Caco-2 (cell line): ENCODE measurements at regions of chr2 and their contacts with region 1.

Region 1: GRCh38 chr2:47323009-47323821 is 79.7 kb upstream of the MSH2 start:
- DNase-seq: peak; percentile 82 to 91
- H3K4me3 ChIP-seq: no peak overlapping the region
- H3K4me3 Mint-ChIP-seq: no peak overlapping the region
- H3K27ac Mint-ChIP-seq: no peak overlapping the region
- H3K4me1 ChIP-seq: peaks cover 28% of the 10 kb centered on the region
- H3K4me1 Mint-ChIP-seq: peaks cover 25% of the 10 kb centered on the region
- H3K27me3 ChIP-seq: no peaks in the 10 kb centered on the region
- H3K27me3 Mint-ChIP-seq: no peaks in the 10 kb centered on the region
- CTCF ChIP-seq: peak; percentile 95 to 98

Region 2: GRCh38 chr2:46803911-46804670 is 519.1 kb before region 1 on chr2:
- CTCF ChIA-PET with region 1: no interaction called
- POLR2A ChIA-PET with region 1: no interaction called
- intact Hi-C with region 1: loop called (anchors 10 kb)
- DNase-seq: no peak
- H3K4me3 ChIP-seq: no peak overlapping the region
- H3K4me3 Mint-ChIP-seq: no peak overlapping the region
- H3K27ac Mint-ChIP-seq: no peak overlapping the region
- H3K4me1 ChIP-seq: no peaks in the 10 kb centered on the region
- H3K4me1 Mint-ChIP-seq: no peaks in the 10 kb centered on the region
- H3K27me3 ChIP-seq: no peaks in the 10 kb centered on the region
- H3K27me3 Mint-ChIP-seq: peaks cover 11% of the 10 kb centered on the region
- CTCF ChIP-seq: no peak

Region 3: GRCh38 chr2:46915811-46916630 is 407.2 kb before region 1 on chr2:
- CTCF ChIA-PET with region 1: interaction called, 3 read pairs
- POLR2A ChIA-PET with region 1: no interaction called
- intact Hi-C with region 1: loop called (anchors 2 kb)
- DNase-seq: peak; percentile 96 to 97
- H3K4me3 ChIP-seq: peak overlapping the region; percentile 93
- H3K4me3 Mint-ChIP-seq: peak overlapping the region; percentile 88
- H3K27ac Mint-ChIP-seq: peak overlapping the region; percentile 0
- H3K4me1 ChIP-seq: peaks cover 17% of the 10 kb centered on the region
- H3K4me1 Mint-ChIP-seq: peaks cover 19% of the 10 kb centered on the region
- H3K27me3 ChIP-seq: no peaks in the 10 kb centered on the region
- H3K27me3 Mint-ChIP-seq: no peaks in the 10 kb centered on the region
- CTCF ChIP-seq: no peak

Region 4: GRCh38 chr2:46942139-46942517 is 381.1 kb before region 1 on chr2:
- CTCF ChIA-PET with region 1: interaction called, 11 read pairs
- POLR2A ChIA-PET with region 1: no interaction called
- intact Hi-C with region 1: no loop called
- DNase-seq: peak in 1 of 2 experiments; percentile 43
- H3K4me3 ChIP-seq: peak overlapping the region; percentile 94
- H3K4me3 Mint-ChIP-seq: peak overlapping the region; percentile 87
- H3K27ac Mint-ChIP-seq: peak overlapping the region; percentile 82
- H3K4me1 ChIP-seq: peaks cover 16% of the 10 kb centered on the region
- H3K4me1 Mint-ChIP-seq: peaks cover 24% of the 10 kb centered on the region
- H3K27me3 ChIP-seq: no peaks in the 10 kb centered on the region
- H3K27me3 Mint-ChIP-seq: no peaks in the 10 kb centered on the region
- CTCF ChIP-seq: no peak

Region 5: DNA sequence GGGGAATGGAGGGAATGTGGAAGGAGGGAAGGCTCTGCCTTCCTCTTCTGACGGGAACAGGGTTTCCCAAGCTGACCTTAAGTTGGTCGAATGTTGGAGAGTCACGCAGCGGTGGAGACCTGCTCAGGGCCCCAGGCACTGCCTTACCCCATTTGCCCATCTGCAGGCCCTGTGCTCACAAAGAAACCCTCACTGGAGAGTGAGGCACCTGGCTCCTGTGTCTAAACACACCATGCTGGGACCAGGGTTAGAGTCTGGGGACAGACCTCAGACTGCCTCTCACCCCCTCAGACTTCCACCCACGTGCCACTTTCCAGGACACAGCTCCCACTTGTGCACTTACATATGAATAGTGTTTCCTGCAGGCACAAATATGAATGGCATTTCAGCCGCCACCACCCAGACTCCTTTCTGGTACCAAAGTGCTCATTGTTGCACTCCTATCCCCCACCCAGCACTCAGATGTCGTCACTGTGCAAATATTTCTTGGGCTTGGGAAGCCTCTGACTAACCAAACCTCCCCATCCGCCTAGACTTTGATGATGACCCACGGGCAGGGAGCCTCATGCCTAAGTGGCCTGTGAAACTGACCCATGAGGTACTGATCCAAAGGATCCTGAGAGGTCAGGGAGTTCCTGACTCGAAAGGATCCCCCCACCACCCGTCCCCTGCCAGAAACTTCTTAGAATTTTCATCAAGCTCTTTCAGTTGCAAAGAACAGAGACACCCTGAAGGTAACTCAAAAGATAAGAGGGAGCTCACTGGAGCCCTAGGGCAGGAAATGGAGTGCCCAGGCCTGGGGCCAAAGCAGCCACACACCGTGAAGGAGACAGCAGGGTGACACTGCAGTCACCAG is 246.4 kb before region 1 on chr2:
- CTCF ChIA-PET with region 1: interaction called, 10 read pairs
- POLR2A ChIA-PET with region 1: interaction called, 3 read pairs
- intact Hi-C with region 1: no loop called
- DNase-seq: peak; percentile 91 to 95
- H3K4me3 ChIP-seq: no peak overlapping the region
- H3K4me3 Mint-ChIP-seq: peak overlapping the region; percentile 52
- H3K27ac Mint-ChIP-seq: peak overlapping the region; percentile 89
- H3K4me1 ChIP-seq: peaks cover 58% of the 10 kb centered on the region
- H3K4me1 Mint-ChIP-seq: peaks cover 73% of the 10 kb centered on the region
- H3K27me3 ChIP-seq: no peaks in the 10 kb centered on the region
- H3K27me3 Mint-ChIP-seq: no peaks in the 10 kb centered on the region
- CTCF ChIP-seq: peak in 1 of 2 experiments; percentile 13

Region 6: DNA sequence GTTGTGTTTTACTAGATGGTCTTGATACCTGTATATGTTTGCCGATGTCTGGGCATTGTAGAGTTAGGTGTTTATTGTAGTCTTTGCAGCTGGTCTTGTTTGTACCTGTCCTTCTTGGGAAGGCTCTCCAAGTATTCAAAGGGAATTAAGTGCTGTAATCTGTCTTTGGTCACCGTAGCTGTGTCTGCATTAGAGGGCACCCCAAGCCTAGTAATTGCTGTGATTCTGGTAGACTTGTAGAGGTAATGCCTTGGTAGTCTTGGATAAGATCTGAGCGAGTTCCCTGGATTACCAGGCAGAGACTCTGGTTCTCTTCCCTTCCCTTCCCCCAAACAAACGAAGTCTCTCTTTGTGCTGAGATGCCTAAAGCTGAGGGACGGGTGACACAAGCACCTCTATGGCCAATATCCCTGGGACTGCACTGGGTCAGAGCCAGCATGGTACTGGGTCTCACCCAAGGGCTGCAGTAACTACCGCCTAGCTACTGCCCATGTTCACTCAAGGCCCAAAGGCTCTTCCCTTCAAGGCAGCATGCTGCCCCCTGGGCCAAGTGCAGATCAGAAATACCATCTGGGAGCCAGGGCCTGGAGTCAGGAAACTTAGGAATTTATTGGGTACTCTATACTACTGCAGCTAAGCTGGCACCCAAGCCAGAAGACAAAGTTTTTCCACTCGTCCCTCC is 195.2 kb before region 1 on chr2:
- CTCF ChIA-PET with region 1: interaction called, 7 read pairs
- POLR2A ChIA-PET with region 1: no interaction called
- intact Hi-C with region 1: loop called (anchors 1 kb)
- DNase-seq: peak in 1 of 2 experiments; percentile 25
- H3K4me3 ChIP-seq: no peak overlapping the region
- H3K4me3 Mint-ChIP-seq: no peak overlapping the region
- H3K27ac Mint-ChIP-seq: peak overlapping the region; percentile 22
- H3K4me1 ChIP-seq: peaks cover 10% of the 10 kb centered on the region
- H3K4me1 Mint-ChIP-seq: peaks cover 26% of the 10 kb centered on the region
- H3K27me3 ChIP-seq: no peaks in the 10 kb centered on the region
- H3K27me3 Mint-ChIP-seq: no peaks in the 10 kb centered on the region
- CTCF ChIP-seq: no peak

Region 7: GRCh38 chr2:47303341-47304148 is 19.7 kb before region 1 on chr2:
- CTCF ChIA-PET with region 1: no interaction called
- POLR2A ChIA-PET with region 1: no interaction called
- intact Hi-C with region 1: no loop called
- DNase-seq: no peak
- H3K4me3 ChIP-seq: no peak overlapping the region
- H3K4me3 Mint-ChIP-seq: peak overlapping the region; percentile 20
- H3K27ac Mint-ChIP-seq: peak overlapping the region; percentile 27
- H3K4me1 ChIP-seq: peaks cover 67% of the 10 kb centered on the region
- H3K4me1 Mint-ChIP-seq: peaks cover 51% of the 10 kb centered on the region
- H3K27me3 ChIP-seq: no peaks in the 10 kb centered on the region
- H3K27me3 Mint-ChIP-seq: no peaks in the 10 kb centered on the region
- CTCF ChIP-seq: no peak

Region 8: DNA sequence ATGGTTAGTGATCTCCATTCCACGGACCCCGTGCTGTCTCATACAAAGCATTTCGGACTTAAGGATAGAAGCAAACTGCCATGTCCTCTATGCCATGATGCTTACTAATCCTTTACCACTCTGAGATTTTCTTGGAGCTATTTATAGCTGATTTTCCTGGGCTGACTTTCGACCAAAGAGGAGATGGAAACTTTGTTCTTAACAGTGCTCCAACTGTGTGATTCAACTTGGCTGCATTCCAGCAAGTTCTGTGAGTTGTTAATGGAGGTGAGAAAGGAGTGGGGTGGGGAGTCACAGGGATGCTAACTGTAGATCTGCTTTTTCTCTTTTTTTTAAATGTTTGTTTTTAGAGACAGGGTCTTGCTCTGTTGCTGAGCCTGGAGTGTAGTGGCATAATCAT is 34.3 kb after region 1 on chr2:
- CTCF ChIA-PET with region 1: no interaction called
- POLR2A ChIA-PET with region 1: no interaction called
- intact Hi-C with region 1: no loop called
- DNase-seq: no peak
- H3K4me3 ChIP-seq: no peak overlapping the region
- H3K4me3 Mint-ChIP-seq: no peak overlapping the region
- H3K27ac Mint-ChIP-seq: peak overlapping the region; percentile 39
- H3K4me1 ChIP-seq: peaks cover 38% of the 10 kb centered on the region
- H3K4me1 Mint-ChIP-seq: peaks cover 27% of the 10 kb centered on the region
- H3K27me3 ChIP-seq: no peaks in the 10 kb centered on the region
- H3K27me3 Mint-ChIP-seq: no peaks in the 10 kb centered on the region
- CTCF ChIP-seq: no peak

Region 9: DNA sequence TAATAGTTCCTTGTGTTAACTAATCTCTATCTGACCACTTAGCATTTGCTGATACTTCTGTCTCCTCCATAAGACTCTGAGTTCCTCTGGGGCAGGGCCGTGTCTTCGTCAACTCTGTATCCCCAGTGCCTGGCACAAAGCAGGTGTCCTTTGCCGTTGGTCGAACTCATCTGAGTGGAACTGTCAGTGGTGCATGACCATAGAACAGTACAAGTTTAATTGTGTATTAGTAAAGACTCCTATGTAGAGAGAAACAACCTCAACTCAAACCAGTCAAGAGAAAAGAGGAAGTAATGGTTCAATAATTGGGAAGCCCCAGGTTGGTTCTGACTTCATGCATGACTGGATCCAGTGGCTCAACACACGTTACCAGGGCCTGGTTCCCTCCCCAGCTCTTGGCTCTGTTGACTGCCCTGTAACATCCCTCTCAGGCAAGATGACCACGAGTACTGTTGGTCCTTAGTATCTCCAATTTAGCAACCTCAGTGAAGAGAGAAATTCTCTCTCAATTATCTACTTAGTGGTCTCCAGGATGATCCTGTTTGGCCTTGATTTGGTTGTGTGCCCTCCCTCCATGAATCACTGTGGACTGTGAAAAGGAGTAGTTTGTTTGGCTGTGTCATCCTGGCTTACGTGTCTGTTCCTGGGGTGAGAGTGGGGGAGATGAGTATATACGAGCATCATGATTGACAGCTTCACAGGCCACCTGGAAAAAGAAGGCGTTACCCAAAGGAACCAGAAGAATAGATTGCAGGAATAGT is 401.2 kb after region 1 on chr2:
- CTCF ChIA-PET with region 1: no interaction called
- POLR2A ChIA-PET with region 1: no interaction called
- intact Hi-C with region 1: no loop called
- DNase-seq: no peak
- H3K4me3 ChIP-seq: no peak overlapping the region
- H3K4me3 Mint-ChIP-seq: no peak overlapping the region
- H3K27ac Mint-ChIP-seq: no peak overlapping the region
- H3K4me1 ChIP-seq: peaks cover 14% of the 10 kb centered on the region
- H3K4me1 Mint-ChIP-seq: no peaks in the 10 kb centered on the region
- H3K27me3 ChIP-seq: no peaks in the 10 kb centered on the region
- H3K27me3 Mint-ChIP-seq: no peaks in the 10 kb centered on the region
- CTCF ChIP-seq: no peak